ENCODE measurements at regions of chr4 and their contacts with region 1.

Region 1: DNA sequence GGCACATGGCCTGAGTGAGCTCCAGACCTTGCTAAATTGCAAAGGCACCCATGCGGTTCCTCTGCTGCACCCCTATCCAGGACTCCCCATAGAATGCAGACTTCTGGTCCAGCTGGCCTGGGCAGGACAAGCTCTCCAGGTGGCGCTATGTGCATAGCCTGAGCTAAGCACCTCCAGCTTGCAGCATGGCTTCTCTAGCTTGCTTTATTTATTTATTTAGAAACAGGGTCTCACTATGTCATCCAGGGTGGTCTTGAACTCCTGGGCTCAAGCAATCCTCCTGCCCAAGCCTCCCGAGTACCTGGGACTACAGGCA is 5.5 kb upstream of the WFS1 start:
- DNase-seq: no peak
- H3K27ac ChIP-seq: no peak overlapping the region
- CTCF ChIP-seq: no peak

Region 2: GRCh38 chr4:6027392-6027791 is 236.8 kb before region 1 on chr4:
- CTCF ChIA-PET with region 1: no interaction called
- POLR2A ChIA-PET with region 1: no interaction called
- DNase-seq: peak; percentile 19
- H3K27ac ChIP-seq: no peak overlapping the region
- CTCF ChIP-seq: no peak

Region 3: GRCh38 chr4:6143603-6144181 is 120.5 kb before region 1 on chr4:
- CTCF ChIA-PET with region 1: no interaction called
- POLR2A ChIA-PET with region 1: no interaction called
- DNase-seq: no peak
- H3K27ac ChIP-seq: no peak overlapping the region
- CTCF ChIP-seq: no peak

Region 4: DNA sequence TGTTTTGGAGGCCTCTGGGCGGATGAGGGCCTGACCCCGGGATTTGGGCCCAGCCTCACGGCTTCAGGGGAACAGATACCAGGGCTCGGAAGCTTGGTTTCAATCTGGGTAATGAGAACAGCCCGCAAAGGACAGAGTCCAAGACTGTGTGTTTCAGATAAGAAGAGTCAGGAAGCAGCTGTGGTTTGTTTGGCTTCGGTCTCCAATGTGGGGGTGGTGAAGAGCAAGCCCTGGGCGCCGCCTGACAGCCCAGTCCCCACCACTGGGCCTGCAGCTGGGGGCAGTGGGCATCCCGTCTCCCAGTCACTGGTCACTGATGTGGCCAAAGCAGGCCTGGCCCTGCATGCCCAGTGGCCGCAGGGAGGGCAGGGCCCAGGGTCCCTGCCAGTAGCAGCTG is 14.6 kb after region 1 on chr4:
- CTCF ChIA-PET with region 1: no interaction called
- POLR2A ChIA-PET with region 1: no interaction called
- DNase-seq: no peak
- H3K27ac ChIP-seq: no peak overlapping the region
- CTCF ChIP-seq: no peak

Region 5: GRCh38 chr4:6316461-6317003 is 52.3 kb after region 1 on chr4:
- CTCF ChIA-PET with region 1: interaction called, 10 read pairs
- POLR2A ChIA-PET with region 1: no interaction called
- DNase-seq: no peak
- H3K27ac ChIP-seq: no peak overlapping the region
- CTCF ChIP-seq: no peak

Measured in RWPE1 (cell line).